Left ventricle myocardium superior (tissue), 1 donor: ENCODE measurements at regions of chr10 and their contacts with region 1.

Region 1: GRCh38 chr10:26881600-26882331 is 21.0 kb upstream of the ABI1 start:
- DNase-seq: no peak
- ATAC-seq: peak; percentile 78

Region 2: DNA sequence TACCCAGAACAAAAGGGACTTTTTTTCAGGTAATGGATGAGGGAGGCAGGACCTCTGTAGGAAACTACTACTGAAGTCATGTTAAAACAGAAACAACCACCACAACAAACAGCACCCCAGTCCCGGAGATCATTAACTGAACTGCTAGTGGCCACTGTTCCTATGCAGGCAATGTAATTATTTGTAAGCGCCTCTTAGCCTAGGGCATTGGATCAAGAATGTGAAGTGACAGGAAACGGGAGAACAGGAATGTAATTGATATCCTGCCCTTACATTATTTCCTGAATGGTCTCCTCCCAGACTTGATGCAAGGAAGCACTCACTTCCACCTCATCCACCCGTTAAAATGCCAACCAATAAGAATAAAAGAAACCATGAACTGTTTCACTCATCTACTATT is 681.9 kb before region 1 on chr10:
- intact Hi-C with region 1: no loop called
- DNase-seq: no peak
- ATAC-seq: no peak

Region 3: GRCh38 chr10:26725837-26726727 is 155.7 kb before region 1 on chr10:
- intact Hi-C with region 1: loop called (anchors 1 kb)
- DNase-seq: peak; percentile 74
- ATAC-seq: peak; percentile 61